Heart left ventricle (tissue), 16 donors: ENCODE measurements at regions of chr1 and their contacts with region 1.

Region 1: DNA sequence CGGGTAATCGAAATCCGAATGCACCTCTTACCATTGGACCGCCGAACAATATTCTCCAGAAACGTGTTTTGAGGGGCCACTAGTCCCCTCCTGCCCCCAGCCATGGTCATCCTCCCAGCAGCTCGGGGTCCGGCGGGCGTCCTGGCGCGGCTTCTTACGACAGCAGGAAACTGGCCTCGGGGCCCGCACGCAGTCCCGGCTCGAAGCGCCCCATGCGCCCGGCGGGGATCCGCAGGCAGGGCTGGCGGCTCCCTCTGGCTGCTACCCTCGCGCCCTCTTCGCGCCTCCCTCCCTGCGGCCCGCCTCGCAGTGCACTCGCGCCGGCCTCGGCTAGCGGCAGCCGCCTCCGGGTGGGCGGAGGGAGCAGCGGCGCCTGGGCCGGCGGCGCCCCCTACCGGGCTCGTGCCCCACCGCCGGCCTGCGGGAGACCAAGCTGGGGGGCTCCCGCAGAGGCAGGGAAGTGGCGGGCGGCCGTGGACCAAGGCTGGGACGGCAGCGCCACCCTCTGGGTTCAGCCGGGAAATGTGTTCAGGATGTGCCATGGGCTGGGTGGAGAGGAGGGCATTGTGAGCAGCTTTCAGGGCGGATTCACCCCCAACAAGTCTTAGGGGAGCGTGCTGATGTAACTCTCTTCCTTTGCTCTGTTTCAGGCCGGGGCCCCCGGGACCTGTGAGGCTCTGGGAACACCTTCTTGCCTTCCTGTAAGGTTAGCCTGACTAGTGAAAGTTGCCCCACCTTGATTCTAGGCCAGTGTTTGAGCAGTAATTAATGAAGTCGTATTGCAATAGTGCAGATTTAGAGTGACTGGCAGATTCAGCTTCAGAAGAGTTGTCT is at the start of gene KCNH1:
- DNase-seq: peak; percentile 63 to 83 (median 77)
- ATAC-seq: peak; percentile 80 to 99 (median 96)
- H3K4me3 ChIP-seq: peak within 1 kb of the TSS; percentile 11 to 54 (median 46)
- H3K27ac ChIP-seq: no peak within 1 kb of the TSS
- H3K4me1 ChIP-seq: peaks cover 0 to 16% (median 10%) of the 10 kb centered on the region in 12 donors
- H3K27me3 ChIP-seq: peaks cover 0 to 70% (median 20%) of the 10 kb centered on the region in 9 donors
- CTCF ChIP-seq: peak; percentile 62 to 97 (median 85)
- POLR2A ChIP-seq: no peak
- total RNA-seq, gene KCNH1: 0.03 TPM in 1 of 9 donors, not detected in the others

Region 2: GRCh38 chr1:210407207-210407886 is 726.7 kb before region 1 on chr1:
- intact Hi-C with region 1: loop called (anchors 1 to 5 kb)
- DNase-seq: peak; percentile 33 to 77 (median 44)
- ATAC-seq: peak in 2 of 4 donors; percentile 63 to 68
- H3K4me3 ChIP-seq: no peak overlapping the region
- H3K27ac ChIP-seq: no peak overlapping the region
- H3K4me1 ChIP-seq: no peaks in the 10 kb centered on the region
- H3K27me3 ChIP-seq: no peaks in the 10 kb centered on the region
- CTCF ChIP-seq: peak; percentile 88 to 99 (median 96)
- POLR2A ChIP-seq: no peak

Region 3: GRCh38 chr1:210448297-210448892 is 685.7 kb before region 1 on chr1:
- intact Hi-C with region 1: loop called (anchors 1 to 5 kb)
- DNase-seq: no peak
- ATAC-seq: peak in 2 of 4 donors; percentile 53 to 63
- H3K4me3 ChIP-seq: no peak overlapping the region
- H3K27ac ChIP-seq: no peak overlapping the region
- H3K4me1 ChIP-seq: no peaks in the 10 kb centered on the region
- H3K27me3 ChIP-seq: no peaks in the 10 kb centered on the region
- CTCF ChIP-seq: peak; percentile 36 to 68 (median 56)
- POLR2A ChIP-seq: no peak

Region 4: DNA sequence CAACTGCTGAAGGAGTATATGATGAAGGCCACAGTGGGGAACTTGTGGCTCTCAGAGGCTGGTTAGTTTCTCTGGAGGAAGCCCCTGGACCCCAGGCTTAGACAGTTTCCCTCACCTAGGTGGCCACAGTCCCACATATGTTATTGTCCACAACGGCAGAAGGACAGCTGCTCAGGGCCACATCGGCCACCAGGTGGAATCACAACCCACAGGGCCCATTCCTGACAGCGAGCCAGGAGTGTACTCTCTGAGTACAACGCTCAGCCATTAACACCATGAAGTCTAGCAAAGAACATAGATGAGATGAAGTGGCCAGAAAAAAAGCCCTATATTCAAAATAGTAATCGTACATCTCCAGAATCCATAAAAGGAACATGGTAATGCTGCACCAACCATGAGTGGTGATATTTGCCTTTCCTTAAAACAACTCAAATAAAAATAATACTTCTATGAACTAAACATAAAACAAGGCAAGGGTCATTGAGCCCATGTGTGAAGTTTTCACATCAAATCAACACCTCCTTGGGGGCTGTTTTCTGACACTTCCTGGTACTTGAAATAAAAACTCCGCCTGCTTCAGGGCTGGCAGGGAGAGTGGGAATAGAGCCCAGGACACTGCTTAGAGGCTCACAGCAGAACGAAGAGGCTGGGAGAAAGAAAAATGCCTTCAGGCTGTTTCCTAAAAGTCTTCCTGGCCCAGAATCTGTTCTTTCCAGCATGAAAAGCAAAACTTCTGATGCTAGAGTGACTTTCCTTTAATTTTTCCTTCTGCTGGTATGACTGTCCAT is 422.0 kb before region 1 on chr1:
- intact Hi-C with region 1: loop called in 2 of 10 experiments (anchors 2 to 10 kb)
- DNase-seq: peak in 2 of 5 donors; percentile 34 to 48
- ATAC-seq: peak in 3 of 4 donors; percentile 39 to 80 (median 54)
- H3K4me3 ChIP-seq: no peak overlapping the region
- H3K27ac ChIP-seq: no peak overlapping the region
- H3K4me1 ChIP-seq: peaks cover 0 to 2% (median 0%) of the 10 kb centered on the region in 12 donors
- H3K27me3 ChIP-seq: no peaks in the 10 kb centered on the region
- CTCF ChIP-seq: peak in 5 of 12 donors; percentile 14 to 44 (median 23)
- POLR2A ChIP-seq: no peak

Region 5: DNA sequence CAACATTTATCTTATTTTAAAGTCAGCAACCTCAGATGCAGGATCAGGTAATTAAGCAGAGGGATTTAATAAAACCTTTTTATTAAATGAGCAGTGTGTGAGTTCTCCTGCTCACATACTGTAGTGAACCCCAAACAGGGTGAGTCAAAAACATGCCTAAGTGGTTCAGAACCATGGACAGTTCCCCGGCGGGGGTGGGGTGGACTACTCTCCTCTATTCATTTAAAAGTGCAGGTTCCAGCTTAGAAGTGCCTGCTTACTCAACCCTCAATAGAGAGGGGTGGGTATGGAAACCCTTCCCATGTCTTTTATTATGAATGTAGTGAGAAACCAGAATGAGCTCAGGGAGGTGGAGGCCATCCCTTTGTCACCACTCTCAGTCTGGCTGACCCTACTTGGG is 407.4 kb before region 1 on chr1:
- intact Hi-C with region 1: no loop called
- DNase-seq: no peak
- ATAC-seq: no peak
- H3K4me3 ChIP-seq: no peak overlapping the region
- H3K27ac ChIP-seq: no peak overlapping the region
- H3K4me1 ChIP-seq: no peaks in the 10 kb centered on the region
- H3K27me3 ChIP-seq: peaks cover 0 to 3% (median 0%) of the 10 kb centered on the region in 9 donors
- CTCF ChIP-seq: no peak
- POLR2A ChIP-seq: no peak